ENCODE measurements at regions of chr1 and their contacts with region 1.

Region 1: DNA sequence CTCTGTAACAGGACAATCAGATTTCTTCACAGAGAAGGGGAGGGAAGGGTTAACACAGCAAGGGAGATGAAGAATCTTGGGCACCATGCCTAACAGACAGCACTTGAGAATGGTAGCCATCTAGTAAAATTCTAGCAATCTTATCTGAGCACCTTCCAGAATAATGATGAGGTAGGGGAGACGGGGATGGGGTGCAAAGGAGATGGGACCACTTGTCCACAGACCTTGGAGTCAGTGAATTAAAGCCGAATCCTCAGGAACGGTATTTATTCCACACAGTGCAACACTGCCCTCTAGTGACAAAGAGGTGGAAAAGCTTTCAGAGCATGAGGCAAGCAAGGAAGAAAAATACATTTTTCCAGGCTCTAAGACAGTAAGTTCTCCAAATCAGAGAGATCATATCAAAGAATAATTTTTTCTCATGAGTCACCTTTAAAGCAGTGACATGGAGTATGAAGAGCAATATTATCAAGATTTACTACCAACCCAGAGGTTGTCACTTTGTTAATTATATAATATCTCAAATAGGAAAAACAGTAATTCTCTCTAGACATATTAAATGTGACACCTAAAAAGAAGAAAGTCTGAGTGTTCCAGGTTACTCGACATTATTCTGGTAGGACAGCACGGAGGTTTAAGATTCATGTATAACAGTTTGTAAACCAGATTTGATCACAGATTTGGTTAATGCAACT is 43.3 kb upstream of the LPAR3 start:
- DNase-seq: no peak
- ATAC-seq: peak; percentile 65
- H3K4me3 Mint-ChIP-seq: no peak overlapping the region
- H3K27ac Mint-ChIP-seq: no peak overlapping the region
- H3K4me1 Mint-ChIP-seq: peaks cover 4% of the 10 kb centered on the region
- H3K27me3 Mint-ChIP-seq: no peaks in the 10 kb centered on the region

Region 2: GRCh38 chr1:84753516-84754385 is 182.5 kb before region 1 on chr1:
- CTCF ChIA-PET with region 1: interaction called, 15 read pairs
- DNase-seq: peak; percentile 75
- ATAC-seq: peak; percentile 88
- H3K4me3 Mint-ChIP-seq: no peak overlapping the region
- H3K27ac Mint-ChIP-seq: no peak overlapping the region
- H3K4me1 Mint-ChIP-seq: peaks cover 15% of the 10 kb centered on the region
- H3K27me3 Mint-ChIP-seq: peaks cover 4% of the 10 kb centered on the region

Region 3: DNA sequence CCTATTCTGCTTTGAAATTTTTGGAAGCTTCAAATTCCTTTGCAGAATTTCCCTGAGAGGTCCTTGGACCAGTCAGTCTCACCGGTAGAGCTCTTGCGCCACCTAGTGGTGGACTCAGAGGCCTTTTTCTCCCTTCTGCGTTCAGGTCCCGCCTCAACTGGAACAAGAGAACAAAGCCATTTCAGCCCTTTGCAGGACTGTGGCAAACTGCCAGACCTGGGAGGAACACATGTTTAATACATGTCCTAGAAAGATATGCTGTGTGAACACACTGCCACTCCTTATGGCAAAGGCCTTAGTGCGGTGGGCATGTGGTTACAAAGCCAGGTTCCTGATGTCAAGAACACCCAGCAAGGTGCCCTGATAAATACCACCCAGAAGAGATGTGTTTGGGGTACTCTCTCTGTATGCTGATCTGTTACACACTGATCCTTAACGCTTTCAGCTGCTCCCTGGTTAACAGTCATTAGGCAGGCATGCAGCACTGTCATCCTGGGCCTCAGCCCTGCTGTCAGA is 163.8 kb before region 1 on chr1:
- CTCF ChIA-PET with region 1: interaction called, 19 read pairs
- DNase-seq: peak; percentile 80
- ATAC-seq: peak; percentile 70
- H3K4me3 Mint-ChIP-seq: no peak overlapping the region
- H3K27ac Mint-ChIP-seq: no peak overlapping the region
- H3K4me1 Mint-ChIP-seq: no peaks in the 10 kb centered on the region
- H3K27me3 Mint-ChIP-seq: peaks cover 14% of the 10 kb centered on the region

Region 4: DNA sequence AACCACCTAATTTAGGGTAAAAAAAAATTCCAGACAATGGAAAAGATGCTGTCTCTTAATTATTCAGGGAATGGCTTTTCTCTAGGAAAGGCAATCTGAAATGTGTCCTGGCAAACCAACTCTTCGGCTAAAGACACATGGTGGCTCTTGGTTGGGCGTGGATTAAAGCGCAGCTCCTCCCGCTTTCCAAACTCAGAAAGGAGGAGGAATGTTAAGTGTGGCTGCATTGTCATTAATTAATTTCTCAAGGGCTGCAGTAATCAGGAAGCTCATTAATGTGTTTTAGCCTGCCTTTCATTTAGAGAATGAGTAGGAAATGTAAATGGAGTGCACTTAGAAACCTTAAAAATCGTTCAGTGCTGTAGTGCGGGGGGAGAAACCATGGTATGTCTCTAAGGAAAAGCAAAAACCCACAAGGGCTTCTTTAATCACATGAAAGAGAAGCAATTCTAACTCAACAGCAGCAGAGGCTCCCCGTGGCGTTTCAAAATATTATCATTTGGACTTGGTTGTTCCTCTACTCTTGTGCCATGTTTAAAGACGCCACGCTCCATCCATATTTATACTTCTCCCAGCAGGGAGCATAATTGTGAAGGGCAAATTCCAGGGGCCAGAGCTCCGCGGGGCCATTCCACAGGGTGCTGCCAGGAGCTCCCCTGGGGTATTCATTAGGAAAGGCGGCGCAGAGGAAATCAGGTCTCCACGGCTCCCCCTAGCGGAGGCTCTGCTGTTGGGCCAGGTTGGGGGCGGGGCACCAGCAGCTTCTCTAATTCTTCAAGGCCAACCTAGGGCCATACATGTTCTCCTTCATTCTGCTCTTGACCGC is 154.1 kb before region 1 on chr1:
- CTCF ChIA-PET with region 1: interaction called, 28 read pairs
- DNase-seq: peak; percentile 85
- ATAC-seq: peak; percentile 89
- H3K4me3 Mint-ChIP-seq: peak overlapping the region; percentile 51
- H3K27ac Mint-ChIP-seq: peak overlapping the region; percentile 34
- H3K4me1 Mint-ChIP-seq: peaks cover 19% of the 10 kb centered on the region
- H3K27me3 Mint-ChIP-seq: peaks cover 8% of the 10 kb centered on the region

Region 5: GRCh38 chr1:84834419-84835064 is 101.7 kb before region 1 on chr1:
- CTCF ChIA-PET with region 1: no interaction called
- DNase-seq: no peak
- ATAC-seq: peak; percentile 30
- H3K4me3 Mint-ChIP-seq: no peak overlapping the region
- H3K27ac Mint-ChIP-seq: no peak overlapping the region
- H3K4me1 Mint-ChIP-seq: peaks cover 9% of the 10 kb centered on the region
- H3K27me3 Mint-ChIP-seq: peaks cover 2% of the 10 kb centered on the region

Region 6: DNA sequence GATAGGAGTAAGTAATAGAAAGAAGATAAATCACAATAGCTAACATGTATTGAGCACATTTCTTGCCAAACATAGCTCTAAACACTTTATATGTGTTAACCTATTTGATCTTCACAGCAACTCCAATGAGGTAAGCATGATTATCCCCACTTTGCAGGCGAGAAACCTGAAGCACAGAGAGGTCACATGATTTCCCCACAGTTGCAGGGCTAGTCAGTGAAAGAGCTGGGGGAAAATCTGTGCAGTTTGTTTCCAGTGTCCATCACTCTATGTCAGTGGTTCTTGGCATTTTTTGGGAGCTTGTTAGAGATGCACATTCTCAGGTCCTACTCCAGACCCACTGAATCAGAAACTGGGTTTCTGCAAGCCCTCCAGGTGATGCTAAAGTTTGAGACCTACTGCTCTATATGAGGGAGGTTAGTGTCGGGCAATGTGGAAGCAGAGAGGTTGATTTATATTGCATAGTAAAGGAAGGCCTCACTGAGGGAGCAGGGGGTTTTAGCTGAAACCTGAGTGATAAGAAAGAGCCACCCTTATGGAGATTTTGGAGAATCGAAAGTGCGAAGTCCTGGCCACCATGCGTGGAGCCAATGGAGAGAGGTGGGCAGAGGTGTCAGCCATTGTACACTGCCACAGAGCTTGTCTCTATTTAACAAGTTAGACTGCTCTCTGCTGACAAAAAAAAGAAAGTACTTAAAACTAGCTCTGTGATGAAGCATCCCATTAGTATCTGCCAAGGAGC is 91.2 kb after region 1 on chr1:
- CTCF ChIA-PET with region 1: interaction called, 12 read pairs
- DNase-seq: peak; percentile 54
- ATAC-seq: peak; percentile 90
- H3K4me3 Mint-ChIP-seq: peak overlapping the region; percentile 37
- H3K27ac Mint-ChIP-seq: peak overlapping the region; percentile 47
- H3K4me1 Mint-ChIP-seq: peaks cover 11% of the 10 kb centered on the region
- H3K27me3 Mint-ChIP-seq: no peaks in the 10 kb centered on the region